ENCODE measurements at regions of chr4 and their contacts with region 1.

Region 1: GRCh38 chr4:25043548-25043947 is 12.8 kb upstream of the LGI2 start:
- DNase-seq: no peak
- ATAC-seq: no peak
- H3K4me3 Mint-ChIP-seq: no peak overlapping the region
- H3K27ac Mint-ChIP-seq: no peak overlapping the region
- H3K4me1 Mint-ChIP-seq: peaks cover 8% of the 10 kb centered on the region
- H3K27me3 Mint-ChIP-seq: peaks cover 16% of the 10 kb centered on the region
- CTCF ChIP-seq: no peak

Region 2: GRCh38 chr4:24912252-24913118 is 131.1 kb before region 1 on chr4 and contains the start of gene CCDC149:
- CTCF ChIA-PET with region 1: no interaction called
- POLR2A ChIA-PET with region 1: no interaction called
- DNase-seq: peak; percentile 78
- ATAC-seq: peak; percentile 83
- H3K4me3 Mint-ChIP-seq: peak within 1 kb of the TSS; percentile 74
- H3K27ac Mint-ChIP-seq: peak within 1 kb of the TSS; percentile 88
- H3K4me1 Mint-ChIP-seq: peaks cover 18% of the 10 kb centered on the region
- H3K27me3 Mint-ChIP-seq: peaks cover 49% of the 10 kb centered on the region
- CTCF ChIP-seq: no peak
- total RNA-seq, gene CCDC149: 3.9 to 4.8 TPM (median 4.4 TPM) in 3 replicates

Region 3: GRCh38 chr4:24988776-24989175 is 54.8 kb before region 1 on chr4:
- CTCF ChIA-PET with region 1: interaction called, 10 read pairs
- POLR2A ChIA-PET with region 1: no interaction called
- DNase-seq: peak; percentile 58
- ATAC-seq: peak; percentile 94
- H3K4me3 Mint-ChIP-seq: peak overlapping the region; percentile 25
- H3K27ac Mint-ChIP-seq: peak overlapping the region; percentile 55
- H3K4me1 Mint-ChIP-seq: peaks cover 21% of the 10 kb centered on the region
- H3K27me3 Mint-ChIP-seq: peaks cover 15% of the 10 kb centered on the region
- CTCF ChIP-seq: peak; percentile 39; the same call in 1 of the 2 replicates

Region 4: GRCh38 chr4:25031077-25031621 is 12.4 kb before region 1 on chr4:
- CTCF ChIA-PET with region 1: interaction called, 18 read pairs
- POLR2A ChIA-PET with region 1: interaction called, 4 read pairs
- DNase-seq: peak; percentile 36
- ATAC-seq: peak; percentile 65
- H3K4me3 Mint-ChIP-seq: peak overlapping the region; percentile 70
- H3K27ac Mint-ChIP-seq: no peak overlapping the region
- H3K4me1 Mint-ChIP-seq: peaks cover 29% of the 10 kb centered on the region
- H3K27me3 Mint-ChIP-seq: peaks cover 58% of the 10 kb centered on the region
- CTCF ChIP-seq: no peak

Region 5: GRCh38 chr4:25131926-25132325 is 88.4 kb after region 1 on chr4:
- CTCF ChIA-PET with region 1: interaction called, 10 read pairs
- POLR2A ChIA-PET with region 1: no interaction called
- DNase-seq: no peak
- ATAC-seq: peak; percentile 94
- H3K4me3 Mint-ChIP-seq: no peak overlapping the region; the same call in 1 of the 2 replicates
- H3K27ac Mint-ChIP-seq: 0 out of 2 replicates have a peak overlapping the region, but pooled peaks have one; percentile 61
- H3K4me1 Mint-ChIP-seq: peaks cover 54% of the 10 kb centered on the region
- H3K27me3 Mint-ChIP-seq: no peaks in the 10 kb centered on the region; the same call in 1 of the 2 replicates
- CTCF ChIP-seq: no peak

Region 6: DNA sequence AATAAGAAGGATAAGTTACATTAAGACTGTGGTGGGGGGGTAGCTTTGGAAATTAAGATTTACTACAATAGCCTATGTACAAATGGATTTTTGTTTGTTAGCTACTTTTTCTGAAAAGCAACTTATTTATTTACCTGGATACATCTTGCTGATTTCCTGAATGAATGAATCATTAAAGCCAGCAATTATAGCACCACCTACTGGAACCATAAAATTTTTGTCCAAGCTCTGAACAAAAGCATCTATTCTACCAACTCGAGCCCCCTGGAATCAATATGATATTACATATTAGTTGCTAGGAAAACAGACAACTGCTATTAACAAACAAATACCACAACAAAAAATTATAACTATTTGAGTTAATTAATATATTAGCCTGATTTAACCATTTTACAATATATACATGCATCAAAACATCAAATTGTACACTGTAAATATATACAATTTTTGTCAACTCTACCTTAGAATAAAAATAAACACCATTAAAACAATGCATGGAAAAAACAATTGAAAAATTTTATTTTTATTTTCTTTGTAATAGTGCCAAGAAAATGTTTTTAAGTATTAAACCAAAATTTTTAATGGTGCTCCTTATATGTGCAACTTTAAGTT is 101.4 kb after region 1 on chr4:
- CTCF ChIA-PET with region 1: interaction called, 10 read pairs
- POLR2A ChIA-PET with region 1: no interaction called
- DNase-seq: no peak
- ATAC-seq: no peak
- H3K4me3 Mint-ChIP-seq: no peak overlapping the region
- H3K27ac Mint-ChIP-seq: no peak overlapping the region
- H3K4me1 Mint-ChIP-seq: no peaks in the 10 kb centered on the region
- H3K27me3 Mint-ChIP-seq: no peaks in the 10 kb centered on the region
- CTCF ChIP-seq: no peak